B cell (primary cell): ENCODE measurements at regions of chr20 and their contacts with region 1.

Region 1: GRCh38 chr20:59082077-59082740 is 39.6 kb upstream of the PRELID3B start:
- DNase-seq: peak; percentile 35
- ATAC-seq: no peak
- H3K4me3 ChIP-seq: no peak overlapping the region
- H3K4me3 Mint-ChIP-seq: no peak overlapping the region
- H3K27ac ChIP-seq: no peak overlapping the region
- H3K27ac Mint-ChIP-seq: no peak overlapping the region
- H3K4me1 ChIP-seq: peaks cover 3 to 7% of the 10 kb centered on the region in 2 donors
- H3K4me1 Mint-ChIP-seq: peaks cover 7% of the 10 kb centered on the region
- H3K27me3 ChIP-seq: peaks cover 0 to 16% (median 0%) of the 10 kb centered on the region in 4 experiments
- H3K27me3 Mint-ChIP-seq: peaks cover 29% of the 10 kb centered on the region
- CTCF ChIP-seq: peak; percentile 69

Region 2: GRCh38 chr20:58930496-58931004 is 151.7 kb before region 1 on chr20:
- CTCF ChIA-PET with region 1: no interaction called
- POLR2A ChIA-PET with region 1: no interaction called
- intact Hi-C with region 1: no loop called
- DNase-seq: no peak
- ATAC-seq: no peak
- H3K4me3 ChIP-seq: no peak overlapping the region
- H3K4me3 Mint-ChIP-seq: no peak overlapping the region
- H3K27ac ChIP-seq: no peak overlapping the region
- H3K27ac Mint-ChIP-seq: no peak overlapping the region
- H3K4me1 ChIP-seq: no peaks in the 10 kb centered on the region
- H3K4me1 Mint-ChIP-seq: no peaks in the 10 kb centered on the region
- H3K27me3 ChIP-seq: no peaks in the 10 kb centered on the region
- H3K27me3 Mint-ChIP-seq: peaks cover 5% of the 10 kb centered on the region
- CTCF ChIP-seq: no peak

Region 3: DNA sequence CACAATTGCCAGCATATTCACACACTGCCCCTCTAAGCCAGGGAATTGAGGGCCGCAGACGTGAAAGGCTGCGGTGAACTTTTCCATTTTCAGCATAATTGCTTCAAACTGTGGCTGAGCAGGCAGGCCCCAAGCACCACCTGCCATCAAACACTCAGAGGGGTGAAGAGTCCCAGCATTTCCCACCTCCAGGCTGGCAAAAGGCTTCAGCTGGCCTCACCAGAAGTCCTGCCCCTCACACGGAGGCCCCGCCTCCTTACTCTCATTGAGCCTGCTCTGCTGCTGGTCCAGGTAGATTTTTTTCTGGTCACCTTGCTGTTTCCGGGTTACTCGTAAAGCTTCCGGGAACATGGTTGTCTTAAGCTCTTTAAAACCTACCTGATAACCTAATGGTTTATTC is 12.4 kb after region 1 on chr20:
- CTCF ChIA-PET with region 1: interaction called, 14 read pairs
- POLR2A ChIA-PET with region 1: no interaction called
- intact Hi-C with region 1: no loop called
- DNase-seq: no peak
- ATAC-seq: no peak
- H3K4me3 ChIP-seq: no peak overlapping the region
- H3K4me3 Mint-ChIP-seq: no peak overlapping the region
- H3K27ac ChIP-seq: no peak overlapping the region
- H3K27ac Mint-ChIP-seq: no peak overlapping the region
- H3K4me1 ChIP-seq: no peaks in the 10 kb centered on the region
- H3K4me1 Mint-ChIP-seq: peaks cover 9% of the 10 kb centered on the region
- H3K27me3 ChIP-seq: no peaks in the 10 kb centered on the region
- H3K27me3 Mint-ChIP-seq: no peaks in the 10 kb centered on the region
- CTCF ChIP-seq: no peak